ENCODE measurements at regions of chr3 and their contacts with region 1.

Region 1: DNA sequence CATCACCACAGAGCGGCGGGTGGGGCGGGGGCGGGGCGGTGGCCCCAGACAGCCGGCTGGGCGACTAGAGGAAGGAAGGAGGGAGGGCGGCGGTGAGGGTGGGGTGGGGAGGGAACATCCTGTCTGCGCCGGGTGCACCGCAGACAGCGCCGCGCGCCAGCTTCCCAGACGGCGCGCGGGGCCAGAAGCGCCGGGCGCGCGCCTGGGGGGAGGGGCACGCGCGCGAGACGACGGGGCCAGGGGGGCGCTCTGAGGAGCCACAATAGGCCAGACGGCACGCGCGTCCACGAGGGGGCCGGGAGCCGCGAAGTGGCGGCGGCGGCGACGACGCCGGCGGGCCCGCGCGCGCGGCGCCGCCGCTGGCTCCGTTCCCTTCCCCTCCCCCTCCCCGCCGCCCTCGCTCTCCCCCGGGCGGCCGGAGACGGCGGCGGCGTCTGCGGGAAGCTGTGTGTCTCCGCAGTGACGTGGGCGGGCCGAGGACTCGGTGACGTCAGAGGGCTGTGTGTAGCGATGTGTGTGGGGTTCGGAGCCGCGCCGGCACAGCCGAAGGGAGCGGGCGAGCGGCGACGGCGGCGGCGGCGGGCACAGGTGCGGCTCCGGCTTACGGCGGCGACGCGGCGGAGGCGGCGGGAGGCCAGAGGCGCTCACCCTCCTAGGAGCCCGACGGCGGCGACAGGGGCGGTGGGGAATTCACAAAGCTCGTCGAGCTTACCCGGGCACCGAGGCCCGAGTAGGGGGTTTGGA is at the start of gene SKIL:
- DNase-seq: peak; percentile 93
- H3K4me3 Mint-ChIP-seq: peak within 1 kb of the TSS; percentile 91
- H3K27ac Mint-ChIP-seq: peak within 1 kb of the TSS; percentile 98
- H3K4me1 Mint-ChIP-seq: peaks cover 47% of the 10 kb centered on the region
- H3K27me3 Mint-ChIP-seq: peaks cover 9% of the 10 kb centered on the region
- total RNA-seq, gene SKIL: 27.5 and 29.4 TPM in 2 replicates

Region 2: GRCh38 chr3:169764452-169765274 is 592.7 kb before region 1 on chr3 and contains the start of gene TERC:
- intact Hi-C with region 1: loop called (anchors 2 kb)
- DNase-seq: peak; percentile 85
- H3K4me3 Mint-ChIP-seq: peak within 1 kb of the TSS; percentile 96
- H3K27ac Mint-ChIP-seq: peak within 1 kb of the TSS; percentile 98
- H3K4me1 Mint-ChIP-seq: peaks cover 24% of the 10 kb centered on the region
- H3K27me3 Mint-ChIP-seq: peaks cover 5% of the 10 kb centered on the region
- total RNA-seq, gene TERC: 3.1 and 3.4 TPM in 2 replicates

Region 3: GRCh38 chr3:170037463-170038433 is 319.6 kb before region 1 on chr3 and contains the start of gene GPR160:
- intact Hi-C with region 1: loop called (anchors 10 kb)
- DNase-seq: peak; percentile 73
- H3K4me3 Mint-ChIP-seq: peak within 1 kb of the TSS; percentile 82
- H3K27ac Mint-ChIP-seq: peak within 1 kb of the TSS; percentile 42
- H3K4me1 Mint-ChIP-seq: peaks cover 24% of the 10 kb centered on the region
- H3K27me3 Mint-ChIP-seq: peaks cover 4% of the 10 kb centered on the region
- total RNA-seq, gene GPR160: 3.4 and 3.5 TPM in 2 replicates

Region 4: GRCh38 chr3:170221924-170222646 is 135.3 kb before region 1 on chr3 and contains the start of gene PRKCI:
- intact Hi-C with region 1: loop called (anchors 1 kb)
- DNase-seq: peak; percentile 85
- H3K4me3 Mint-ChIP-seq: peak within 1 kb of the TSS; percentile 94
- H3K27ac Mint-ChIP-seq: peak within 1 kb of the TSS; percentile 87
- H3K4me1 Mint-ChIP-seq: peaks cover 25% of the 10 kb centered on the region
- H3K27me3 Mint-ChIP-seq: no peaks in the 10 kb centered on the region
- total RNA-seq, gene PRKCI: 23.0 and 24.2 TPM in 2 replicates

Region 5: GRCh38 chr3:170368921-170369320 is 11.6 kb after region 1 on chr3:
- intact Hi-C with region 1: loop called (anchors 2 kb)
- DNase-seq: no peak
- H3K4me3 Mint-ChIP-seq: no peak overlapping the region
- H3K27ac Mint-ChIP-seq: no peak overlapping the region
- H3K4me1 Mint-ChIP-seq: peaks cover 19% of the 10 kb centered on the region
- H3K27me3 Mint-ChIP-seq: no peaks in the 10 kb centered on the region

Region 6: DNA sequence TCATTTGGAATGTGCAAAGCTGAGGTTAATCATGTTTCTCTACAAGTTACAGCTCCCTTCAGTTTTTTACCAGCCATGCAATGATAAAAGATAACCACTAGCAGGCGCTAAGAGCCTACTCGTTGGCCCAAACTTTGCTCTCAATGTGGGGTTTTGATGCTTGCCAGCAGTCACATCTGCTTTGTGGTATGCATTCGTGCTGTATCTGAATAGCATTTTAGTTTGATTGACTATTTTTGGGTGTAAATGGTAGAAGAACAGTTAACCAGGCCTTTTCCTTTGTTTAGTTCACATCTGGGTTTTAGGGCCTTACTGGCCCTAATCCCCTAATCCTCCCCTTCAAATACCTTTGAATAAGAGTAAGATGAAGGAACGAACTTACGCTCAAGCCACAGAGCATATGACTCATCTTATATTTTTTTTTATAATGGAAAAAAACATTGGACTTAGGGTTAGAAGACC is 56.9 kb after region 1 on chr3:
- intact Hi-C with region 1: no loop called
- DNase-seq: peak; percentile 17
- H3K4me3 Mint-ChIP-seq: no peak overlapping the region
- H3K27ac Mint-ChIP-seq: no peak overlapping the region
- H3K4me1 Mint-ChIP-seq: peaks cover 5% of the 10 kb centered on the region
- H3K27me3 Mint-ChIP-seq: peaks cover 37% of the 10 kb centered on the region

Region 7: DNA sequence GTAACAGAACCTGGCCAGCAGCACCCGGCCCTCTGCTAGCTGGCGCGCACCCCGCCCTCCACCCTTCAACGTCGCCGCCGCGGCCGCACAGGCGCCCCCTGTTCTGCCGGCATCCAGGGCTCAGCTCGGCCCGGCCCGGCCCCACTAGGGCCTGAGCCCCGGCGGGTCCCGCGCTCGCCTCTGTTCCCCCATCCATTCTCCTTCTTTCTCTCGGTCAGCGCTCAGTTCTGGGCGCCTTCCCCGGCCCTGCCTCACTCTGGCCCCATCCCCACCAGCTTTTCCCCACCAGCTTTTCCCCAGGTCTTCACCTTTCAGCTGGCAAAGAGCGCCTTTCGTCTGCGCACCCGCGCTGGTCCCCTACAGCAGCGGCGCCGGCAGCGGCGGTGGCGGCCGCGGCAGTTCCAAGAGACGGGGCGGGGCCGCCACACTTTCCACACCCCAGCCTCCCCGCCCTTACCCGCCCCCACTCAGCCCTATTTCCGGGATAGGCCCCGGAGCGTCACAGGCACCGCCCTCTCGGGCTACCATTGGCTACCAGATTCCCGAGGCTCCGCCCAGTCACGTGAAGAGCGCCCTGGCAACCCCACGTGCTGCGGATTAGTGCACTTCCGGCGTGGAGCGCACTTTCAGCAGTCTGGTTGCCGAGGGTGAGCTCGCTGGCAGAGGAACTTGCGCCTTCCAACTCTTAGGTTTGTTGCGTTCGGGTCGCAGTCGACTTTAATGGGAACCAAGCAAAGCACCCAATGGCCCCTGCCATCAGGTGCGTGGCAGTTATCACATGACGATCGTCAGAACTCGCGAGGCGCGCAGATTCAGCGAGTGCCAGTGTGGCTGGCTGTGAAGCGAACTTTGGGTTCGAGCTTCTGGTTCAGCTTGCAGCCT is 551.1 kb after region 1 on chr3 and contains the start of gene EIF5A2:
- intact Hi-C with region 1: loop called (anchors 5 kb)
- DNase-seq: peak; percentile 88
- H3K4me3 Mint-ChIP-seq: peak within 1 kb of the TSS; percentile 96
- H3K27ac Mint-ChIP-seq: peak within 1 kb of the TSS; percentile 85
- H3K4me1 Mint-ChIP-seq: peaks cover 24% of the 10 kb centered on the region
- H3K27me3 Mint-ChIP-seq: peaks cover 12% of the 10 kb centered on the region
- total RNA-seq, gene EIF5A2: 8.1 and 10.5 TPM in 2 replicates

Measured in activated T-helper 1 cell treated with anti-CD3 and anti-CD28 coated beads, Interleukin-12 subunit alpha, Interleukin-12 subunit beta, Interleukin-2, Interleukin-4 antibody, amounts not matched to agents 30 ng/mL and 10 ng/mL and 1 ng/mL, durations not matched to agents 14 hours and 24 hours and 36 hours (primary cell).